Aorta (tissue), 5 donors: ENCODE measurements at regions of chr1 and their contacts with region 1.

Region 1: GRCh38 chr1:111197598-111198284 is 2.7 kb downstream of the DENND2D start:
- DNase-seq: no peak
- ATAC-seq: no peak
- H3K4me3 ChIP-seq: no peak overlapping the region
- H3K27ac ChIP-seq: no peak overlapping the region
- H3K4me1 ChIP-seq: no peaks in the 10 kb centered on the region
- H3K27me3 ChIP-seq: no peaks in the 10 kb centered on the region

Region 2: DNA sequence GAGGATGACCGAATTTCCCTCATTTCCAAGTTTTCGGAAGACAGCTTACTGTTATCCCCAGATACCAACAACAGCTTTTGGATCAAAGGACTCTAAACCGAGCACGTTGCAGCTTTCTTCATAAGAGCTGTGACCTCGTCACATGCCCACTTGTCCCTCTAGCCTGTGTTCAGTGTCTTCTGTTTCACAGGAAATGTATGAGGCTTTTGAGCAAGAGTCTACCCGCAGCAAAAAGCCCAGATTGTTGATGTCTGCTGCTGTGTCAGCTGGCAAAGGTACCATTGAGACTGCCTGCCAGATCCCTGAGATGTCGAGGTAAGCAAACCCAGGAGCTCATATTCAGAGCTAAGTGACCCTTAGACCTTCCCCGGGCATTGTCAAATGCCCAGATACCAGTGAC is 53.8 kb after region 1 on chr1:
- intact Hi-C with region 1: loop called in 1 of 2 experiments (anchors 10 kb)
- DNase-seq: no peak
- ATAC-seq: no peak
- H3K4me3 ChIP-seq: no peak overlapping the region
- H3K27ac ChIP-seq: no peak overlapping the region
- H3K4me1 ChIP-seq: no peaks in the 10 kb centered on the region
- H3K27me3 ChIP-seq: no peaks in the 10 kb centered on the region

Region 3: GRCh38 chr1:111704776-111705175 is 507.0 kb after region 1 on chr1:
- intact Hi-C with region 1: no loop called
- DNase-seq: no peak
- ATAC-seq: no peak
- H3K4me3 ChIP-seq: no peak overlapping the region
- H3K27ac ChIP-seq: no peak overlapping the region
- H3K4me1 ChIP-seq: no peaks in the 10 kb centered on the region
- H3K27me3 ChIP-seq: no peaks in the 10 kb centered on the region